ENCODE measurements at regions of chr3 and their contacts with region 1.

Region 1: DNA sequence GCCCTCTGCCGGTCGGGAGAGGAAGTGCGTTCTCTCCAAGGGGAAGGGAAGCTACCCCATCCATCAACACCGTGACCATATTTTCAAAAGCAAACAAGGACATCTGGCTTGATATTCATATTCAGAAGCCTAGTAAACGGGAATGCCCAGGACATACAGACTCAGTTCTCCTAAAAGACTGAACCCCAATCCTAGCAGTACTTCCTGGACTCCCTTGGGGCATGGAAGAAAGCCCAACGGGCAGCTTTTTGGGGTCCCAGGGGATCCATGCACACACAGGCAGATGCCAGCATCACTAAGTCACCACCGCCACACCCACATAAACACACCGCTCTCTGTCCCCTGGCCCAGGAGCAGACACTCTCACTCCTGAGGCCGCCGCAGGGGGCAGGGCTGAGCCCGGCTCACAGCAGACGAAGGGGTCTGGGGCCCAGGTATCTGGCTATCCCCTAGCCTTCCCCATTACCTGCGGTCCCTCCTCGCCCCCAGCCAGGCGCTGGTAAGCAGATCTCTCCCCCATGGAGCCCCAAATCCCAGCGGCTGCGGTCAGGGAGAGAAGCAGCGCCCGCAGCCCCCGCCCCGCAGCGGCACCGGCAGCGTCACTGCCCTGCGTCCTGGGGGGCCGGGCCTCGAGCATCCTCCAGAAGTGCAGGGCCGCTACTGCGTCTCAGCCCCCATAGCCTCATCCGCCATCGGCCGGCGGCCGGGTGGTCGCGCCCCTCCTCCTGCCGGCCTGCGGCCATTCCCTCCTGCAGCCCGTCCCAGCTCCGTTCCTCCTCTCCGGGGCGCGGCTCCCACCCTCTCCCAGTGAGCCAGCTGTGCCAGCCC is 13.4 kb downstream of the TNK2 start:
- DNase-seq: peak; percentile 61 to 74 (median 69)
- ATAC-seq: peak; percentile 25 to 74 (median 54)
- H3K4me3 ChIP-seq: peak overlapping the region; percentile 48 to 70 (median 66)
- H3K27ac ChIP-seq: peak overlapping the region; percentile 58 to 78 (median 70)
- H3K4me1 ChIP-seq: peaks cover 0 to 45% (median 22%) of the 10 kb centered on the region in 4 donors
- H3K27me3 ChIP-seq: no peaks in the 10 kb centered on the region
- CTCF ChIP-seq: peak; percentile 82 to 93 (median 88)
- POLR2A ChIP-seq: no peak

Region 2: DNA sequence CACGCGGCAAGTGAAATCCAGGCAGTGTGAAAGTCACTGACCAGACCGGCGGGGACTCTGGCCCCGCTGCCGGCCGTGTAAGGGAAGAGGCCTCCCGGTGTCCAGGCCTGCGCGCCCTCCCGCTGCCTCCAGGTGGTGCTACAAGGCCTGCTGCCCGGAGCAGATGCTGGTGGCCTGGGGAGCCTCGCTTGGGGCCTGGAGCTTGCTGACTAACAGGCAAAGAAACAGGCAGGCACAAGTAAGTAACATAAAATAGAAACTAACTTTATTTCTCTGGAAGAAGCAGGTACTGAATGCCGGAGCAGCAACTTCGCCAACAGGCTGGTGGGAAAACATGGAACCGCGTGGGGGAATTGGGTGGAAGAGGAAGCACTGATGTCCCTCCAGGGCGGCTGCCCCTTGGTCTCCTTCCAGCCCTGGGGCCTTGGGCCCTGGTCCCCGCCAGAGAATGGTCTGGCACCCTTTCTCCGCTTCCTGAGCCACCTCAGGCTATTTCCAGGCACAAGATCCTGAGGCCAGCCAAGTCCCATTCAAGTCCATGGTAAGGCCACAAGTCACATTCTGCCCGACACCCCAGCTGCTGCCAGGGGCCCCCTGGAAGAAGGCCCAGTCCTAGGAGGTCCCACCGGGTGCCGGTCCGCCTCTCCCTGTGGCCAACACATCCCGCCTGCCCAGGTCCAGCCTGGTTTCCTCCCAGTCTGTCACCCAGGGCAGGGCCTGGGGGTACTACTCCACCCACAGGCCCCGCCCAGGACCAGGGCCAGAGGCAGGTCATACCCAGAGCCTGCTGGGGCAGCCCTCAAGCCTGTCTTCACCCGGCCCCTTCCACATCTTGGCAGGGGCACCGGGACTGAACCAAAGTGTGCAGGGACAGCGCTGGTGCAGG is 31.6 kb before region 1 on chr3:
- intact Hi-C with region 1: loop called (anchors 5 kb)
- DNase-seq: peak; percentile 92 to 93 (median 92)
- ATAC-seq: peak; percentile 92 to 97 (median 94)
- H3K4me3 ChIP-seq: no peak overlapping the region
- H3K27ac ChIP-seq: no peak overlapping the region
- H3K4me1 ChIP-seq: peaks cover 0 to 16% (median 3%) of the 10 kb centered on the region in 4 donors
- H3K27me3 ChIP-seq: no peaks in the 10 kb centered on the region
- CTCF ChIP-seq: peak; percentile 96 to 98 (median 98)
- POLR2A ChIP-seq: no peak

Measured in right lobe of liver (tissue), 6 donors.